Activated naive CD4-positive, alpha-beta T cell treated with anti-CD3 and anti-CD28 coated beads for 36 hours (primary cell): ENCODE measurements at regions of chr11 and their contacts with region 1.

Region 1: DNA sequence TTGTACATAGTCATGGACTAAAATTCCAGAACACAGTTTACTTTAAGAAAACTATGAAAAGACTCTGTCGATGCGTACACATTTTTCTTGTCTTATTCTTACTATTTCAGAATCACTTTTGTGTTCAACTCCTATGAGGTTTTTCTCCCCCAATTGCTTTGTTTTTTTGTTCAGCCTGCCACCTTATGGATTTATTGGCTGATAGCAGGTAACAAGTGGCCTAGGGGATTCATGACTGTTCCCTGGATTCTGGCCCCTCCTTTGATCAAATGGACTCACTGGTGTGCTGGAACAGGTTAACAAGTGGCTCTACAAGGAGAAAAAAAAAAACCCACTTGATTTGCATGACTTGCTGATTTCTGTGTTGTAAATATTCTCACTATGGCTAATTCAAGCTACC is 10.6 kb downstream of the MMP20 start:
- DNase-seq: no peak
- H3K4me3 Mint-ChIP-seq: no peak overlapping the region
- H3K27ac Mint-ChIP-seq: no peak overlapping the region
- H3K4me1 Mint-ChIP-seq: peaks cover 13% of the 10 kb centered on the region
- H3K27me3 Mint-ChIP-seq: no peaks in the 10 kb centered on the region

Region 2: DNA sequence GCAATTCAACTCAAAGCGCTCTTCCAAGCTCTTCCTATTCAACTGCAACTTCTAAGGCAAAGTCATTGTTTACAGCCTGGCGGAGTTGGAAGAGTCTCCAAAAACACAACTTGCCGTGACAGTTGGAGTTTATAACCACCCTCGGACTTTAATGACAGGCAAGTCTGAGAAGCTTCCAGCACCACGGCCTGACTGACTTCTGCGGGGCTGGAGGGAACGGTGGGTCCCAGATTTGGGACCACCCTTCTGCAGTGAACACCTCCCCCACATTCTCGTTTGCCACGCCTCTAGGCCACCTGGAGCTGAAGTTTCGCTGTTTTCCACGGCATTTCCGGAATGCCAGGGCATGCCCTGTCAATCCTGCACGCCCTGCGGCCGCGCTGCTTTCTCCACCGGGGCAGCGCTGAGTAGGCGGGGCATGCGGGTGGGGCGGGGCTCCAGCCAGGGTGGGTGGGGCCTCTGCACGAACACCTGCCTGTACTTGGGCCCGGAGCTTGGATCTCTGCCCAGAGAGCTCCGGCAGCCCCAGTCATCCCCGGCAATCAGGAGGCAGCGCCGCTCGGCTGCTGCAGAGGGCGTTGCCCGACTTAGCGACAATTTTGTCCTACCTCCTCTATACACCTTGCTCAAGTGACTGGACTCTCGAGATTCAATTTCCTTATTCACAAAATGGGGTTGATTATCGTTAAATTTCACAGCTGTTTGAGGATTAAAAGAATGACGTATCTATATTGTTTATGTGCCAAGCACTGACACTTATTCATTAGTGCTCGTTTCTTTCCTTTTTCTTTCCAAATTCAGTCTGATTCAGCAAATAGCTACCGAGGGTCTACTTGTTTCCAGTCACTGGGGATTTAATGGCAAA is 345.9 kb before region 1 on chr11:
- CTCF ChIA-PET with region 1: interaction called, 4 read pairs
- intact Hi-C with region 1: loop called (anchors 5 kb)
- DNase-seq: peak; percentile 91
- H3K4me3 Mint-ChIP-seq: peak overlapping the region; percentile 60
- H3K27ac Mint-ChIP-seq: no peak overlapping the region
- H3K4me1 Mint-ChIP-seq: peaks cover 32% of the 10 kb centered on the region
- H3K27me3 Mint-ChIP-seq: no peaks in the 10 kb centered on the region

Region 3: GRCh38 chr11:102325088-102325487 is 289.4 kb before region 1 on chr11:
- CTCF ChIA-PET with region 1: no interaction called
- intact Hi-C with region 1: no loop called
- DNase-seq: no peak
- H3K4me3 Mint-ChIP-seq: no peak overlapping the region
- H3K27ac Mint-ChIP-seq: no peak overlapping the region
- H3K4me1 Mint-ChIP-seq: peaks cover 48% of the 10 kb centered on the region
- H3K27me3 Mint-ChIP-seq: no peaks in the 10 kb centered on the region

Region 4: GRCh38 chr11:102341844-102342318 is 272.6 kb before region 1 on chr11:
- CTCF ChIA-PET with region 1: interaction called, 50 read pairs
- intact Hi-C with region 1: loop called (anchors 1 kb)
- DNase-seq: peak; percentile 90
- H3K4me3 Mint-ChIP-seq: no peak overlapping the region
- H3K27ac Mint-ChIP-seq: no peak overlapping the region
- H3K4me1 Mint-ChIP-seq: peaks cover 46% of the 10 kb centered on the region
- H3K27me3 Mint-ChIP-seq: no peaks in the 10 kb centered on the region

Region 5: GRCh38 chr11:102390667-102391465 is 223.6 kb before region 1 on chr11:
- CTCF ChIA-PET with region 1: interaction called, 41 read pairs
- intact Hi-C with region 1: loop called (anchors 1 kb)
- DNase-seq: peak; percentile 72
- H3K4me3 Mint-ChIP-seq: no peak overlapping the region
- H3K27ac Mint-ChIP-seq: peak overlapping the region; percentile 29
- H3K4me1 Mint-ChIP-seq: peaks cover 40% of the 10 kb centered on the region
- H3K27me3 Mint-ChIP-seq: no peaks in the 10 kb centered on the region

Region 6: DNA sequence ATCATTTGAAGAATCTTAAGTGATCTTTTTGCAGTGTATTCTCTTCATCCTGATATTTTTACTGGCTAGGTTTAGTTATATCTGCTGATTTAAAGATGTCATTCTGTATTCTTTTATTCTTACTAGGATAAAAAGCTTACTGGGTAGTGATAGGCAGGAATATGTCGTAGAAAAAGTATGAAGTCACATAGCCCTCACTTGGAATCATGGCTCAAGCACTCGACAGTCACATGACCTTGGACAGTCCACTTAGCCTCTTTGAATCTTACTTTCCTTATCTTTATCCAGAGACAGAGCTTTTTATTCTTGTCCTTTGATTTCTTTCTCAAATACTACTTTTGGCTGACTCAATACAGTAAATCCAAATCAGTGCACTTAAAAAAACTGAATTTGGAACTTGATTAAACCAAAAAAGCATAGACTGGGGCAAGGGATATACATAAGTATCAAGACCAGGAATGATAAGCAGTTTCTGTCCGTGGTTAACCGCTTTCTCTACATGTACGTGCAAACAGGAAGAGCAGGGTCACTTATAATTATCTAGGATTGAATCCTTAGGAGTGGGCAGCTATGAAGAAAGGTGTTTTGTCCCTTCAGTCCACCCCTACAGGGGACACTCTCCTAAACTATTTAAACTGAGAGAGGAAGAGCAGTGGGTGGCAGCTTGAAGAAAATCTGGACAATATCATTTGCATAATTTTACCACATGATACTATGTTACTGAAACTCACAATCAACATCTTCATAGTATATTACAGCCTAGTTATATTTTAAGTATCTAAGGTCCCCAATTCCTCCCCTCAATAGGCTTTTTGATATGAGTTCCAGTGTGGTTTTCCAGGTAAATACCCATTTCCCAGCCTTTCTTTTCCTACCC is 91.9 kb before region 1 on chr11:
- CTCF ChIA-PET with region 1: interaction called, 22 read pairs
- intact Hi-C with region 1: loop called (anchors 5 kb)
- DNase-seq: no peak
- H3K4me3 Mint-ChIP-seq: no peak overlapping the region
- H3K27ac Mint-ChIP-seq: no peak overlapping the region
- H3K4me1 Mint-ChIP-seq: no peaks in the 10 kb centered on the region
- H3K27me3 Mint-ChIP-seq: peaks cover 4% of the 10 kb centered on the region

Region 7: DNA sequence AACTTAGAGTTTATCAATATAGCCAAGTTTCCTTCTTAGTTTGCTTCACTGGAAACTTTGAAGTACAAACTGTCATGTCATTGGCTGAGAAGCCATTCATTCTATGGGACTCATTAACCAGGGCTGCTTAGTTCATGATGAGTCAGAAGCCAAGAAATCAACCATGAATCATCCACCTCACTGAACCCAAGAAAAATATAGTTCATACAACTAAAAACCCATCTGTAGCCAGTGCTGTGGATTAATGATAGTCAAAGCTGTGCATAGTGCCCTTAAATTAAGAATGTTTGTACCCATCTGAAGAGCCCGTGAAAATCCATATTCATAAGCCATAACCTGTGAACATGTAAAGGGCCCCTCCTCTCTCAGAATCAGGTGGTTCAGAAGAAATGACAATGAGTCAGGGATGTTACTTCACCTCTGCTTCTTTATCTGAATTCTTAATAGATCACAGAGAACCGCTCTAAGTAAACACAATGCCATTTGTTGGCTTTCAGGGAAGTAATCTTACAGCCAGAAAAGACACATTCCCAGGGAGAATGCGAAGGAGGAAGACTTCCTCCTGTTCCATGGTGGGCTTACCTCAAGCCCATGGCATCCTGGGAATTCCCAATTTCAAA is 14.7 kb before region 1 on chr11:
- CTCF ChIA-PET with region 1: interaction called, 17 read pairs
- intact Hi-C with region 1: loop called (anchors 1 kb)
- DNase-seq: peak; percentile 43
- H3K4me3 Mint-ChIP-seq: no peak overlapping the region
- H3K27ac Mint-ChIP-seq: peak overlapping the region; percentile 75
- H3K4me1 Mint-ChIP-seq: peaks cover 27% of the 10 kb centered on the region
- H3K27me3 Mint-ChIP-seq: no peaks in the 10 kb centered on the region